ENCODE measurements at regions of chr5 and their contacts with region 1.

Region 1: GRCh38 chr5:169197343-169197742 is 103.6 kb downstream of the SLIT3 start:
- DNase-seq: no peak

Region 2: GRCh38 chr5:168765551-168766425 is 431.6 kb before region 1 on chr5:
- intact Hi-C with region 1: no loop called
- DNase-seq: no peak

Region 3: GRCh38 chr5:169116961-169117461 is 80.3 kb before region 1 on chr5:
- intact Hi-C with region 1: loop called (anchors 5 kb)
- DNase-seq: no peak

Region 4: GRCh38 chr5:169213479-169213878 is 16.1 kb after region 1 on chr5:
- intact Hi-C with region 1: no loop called
- DNase-seq: no peak